Activated B cell treated with CpG ODN at 0.5 μM for 24 hours (primary cell): ENCODE measurements at regions of chr11 and their contacts with region 1.

Region 1: DNA sequence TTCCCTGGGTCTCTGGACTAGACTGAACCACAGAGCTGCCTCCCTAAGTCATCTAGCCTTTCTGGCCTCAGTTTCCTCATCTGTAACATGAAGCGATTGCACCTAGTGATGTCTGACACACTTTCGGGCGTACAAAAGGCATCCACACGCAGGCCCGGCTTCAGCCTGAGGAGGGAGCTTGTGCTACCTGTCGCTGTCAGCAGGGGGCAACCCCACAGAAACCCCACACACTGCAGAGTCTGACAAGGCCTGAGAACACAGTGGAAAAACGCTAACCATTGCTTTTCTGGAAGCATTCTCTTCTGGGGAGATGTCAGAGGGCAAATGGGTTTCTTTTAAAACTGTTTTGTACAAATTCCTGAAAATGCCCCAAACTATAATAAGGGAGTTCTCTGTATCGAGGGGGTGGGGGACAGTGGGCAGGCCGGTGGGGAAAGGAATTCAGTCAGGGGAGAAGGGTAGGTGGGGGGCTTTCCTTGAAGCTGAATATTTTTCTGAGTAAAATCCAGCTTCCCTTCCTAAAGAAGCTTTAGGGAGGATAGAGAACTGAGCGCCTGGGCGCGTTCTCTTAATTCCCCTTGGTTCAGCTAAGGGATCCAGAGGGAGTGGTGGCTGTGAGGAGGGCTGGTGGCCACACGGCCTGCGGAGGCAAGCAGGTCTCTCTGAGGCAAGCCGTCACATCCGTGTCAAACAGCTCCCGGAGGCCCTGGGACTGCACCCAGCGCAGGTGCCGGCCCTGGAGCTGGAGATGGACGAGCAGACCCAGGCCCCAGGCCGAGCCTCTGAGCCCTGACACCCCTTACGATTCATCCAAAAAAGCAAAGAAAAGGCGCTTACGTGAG is 533 bp downstream of the ELF5 start:
- DNase-seq: peak; percentile 44
- ATAC-seq: peak; percentile 99
- H3K4me3 Mint-ChIP-seq: no peak overlapping the region
- H3K27ac Mint-ChIP-seq: no peak overlapping the region
- H3K4me1 Mint-ChIP-seq: no peaks in the 10 kb centered on the region
- H3K27me3 Mint-ChIP-seq: no peaks in the 10 kb centered on the region
- CTCF ChIP-seq: peak; percentile 35

Region 2: DNA sequence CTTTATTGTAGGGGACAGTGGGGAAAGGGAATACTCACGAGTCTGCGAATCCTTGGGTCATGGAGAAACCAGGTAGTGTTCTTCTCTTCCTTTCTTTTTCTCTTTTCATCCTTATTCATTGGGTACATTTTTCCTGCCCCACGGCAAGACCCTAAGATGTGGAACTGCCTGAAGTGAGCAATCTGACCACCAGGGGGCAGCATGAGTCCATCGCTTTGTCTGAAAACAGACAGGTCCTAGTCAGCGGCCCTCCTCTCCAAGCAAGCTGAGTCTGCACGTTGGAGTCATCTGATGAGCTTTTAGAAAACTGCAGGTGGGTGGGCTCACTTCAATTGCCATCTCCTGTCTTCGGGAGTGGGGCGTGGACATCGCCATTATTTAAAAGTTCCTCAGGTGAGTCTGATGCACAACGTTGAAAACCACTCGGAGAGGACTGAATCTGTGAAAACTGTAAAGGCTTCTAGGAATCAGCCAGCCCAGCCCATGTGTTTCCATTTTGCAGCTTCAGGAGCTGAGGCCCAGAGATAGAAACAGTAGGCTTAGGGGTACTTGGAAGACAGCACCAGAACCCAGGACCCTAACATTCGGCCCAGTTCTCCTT is 704.7 kb before region 1 on chr11:
- CTCF ChIA-PET with region 1: no interaction called
- POLR2A ChIA-PET with region 1: no interaction called
- intact Hi-C with region 1: no loop called
- DNase-seq: peak; percentile 76
- ATAC-seq: peak; percentile 91
- H3K4me3 Mint-ChIP-seq: no peak overlapping the region
- H3K27ac Mint-ChIP-seq: no peak overlapping the region
- H3K4me1 Mint-ChIP-seq: no peaks in the 10 kb centered on the region
- H3K27me3 Mint-ChIP-seq: peaks cover 6% of the 10 kb centered on the region
- CTCF ChIP-seq: peak; percentile 95

Region 3: GRCh38 chr11:34501949-34502348 is 11.1 kb before region 1 on chr11:
- CTCF ChIA-PET with region 1: interaction called, 12 read pairs
- POLR2A ChIA-PET with region 1: no interaction called
- intact Hi-C with region 1: no loop called
- DNase-seq: no peak
- ATAC-seq: no peak
- H3K4me3 Mint-ChIP-seq: no peak overlapping the region
- H3K27ac Mint-ChIP-seq: no peak overlapping the region
- H3K4me1 Mint-ChIP-seq: no peaks in the 10 kb centered on the region
- H3K27me3 Mint-ChIP-seq: peaks cover 12% of the 10 kb centered on the region
- CTCF ChIP-seq: no peak

Region 4: GRCh38 chr11:34890812-34891211 is 377.8 kb after region 1 on chr11:
- CTCF ChIA-PET with region 1: interaction called, 43 read pairs
- POLR2A ChIA-PET with region 1: no interaction called
- intact Hi-C with region 1: loop called (anchors 1 kb)
- DNase-seq: no peak
- ATAC-seq: no peak
- H3K4me3 Mint-ChIP-seq: no peak overlapping the region
- H3K27ac Mint-ChIP-seq: no peak overlapping the region
- H3K4me1 Mint-ChIP-seq: no peaks in the 10 kb centered on the region
- H3K27me3 Mint-ChIP-seq: no peaks in the 10 kb centered on the region
- CTCF ChIP-seq: no peak

Region 5: GRCh38 chr11:35873721-35874120 is 1360.7 kb after region 1 on chr11:
- CTCF ChIA-PET with region 1: no interaction called
- POLR2A ChIA-PET with region 1: no interaction called
- intact Hi-C with region 1: no loop called
- DNase-seq: no peak
- ATAC-seq: no peak
- H3K4me3 Mint-ChIP-seq: no peak overlapping the region
- H3K27ac Mint-ChIP-seq: no peak overlapping the region
- H3K4me1 Mint-ChIP-seq: no peaks in the 10 kb centered on the region
- H3K27me3 Mint-ChIP-seq: peaks cover 9% of the 10 kb centered on the region
- CTCF ChIP-seq: no peak